ENCODE measurements at regions of chr6 and their contacts with region 1.

Region 1: GRCh38 chr6:102154176-102154575 is 760.7 kb downstream of the GRIK2 start:
- DNase-seq: no peak
- H3K4me3 ChIP-seq: no peak overlapping the region
- H3K27ac ChIP-seq: no peak overlapping the region
- H3K4me1 ChIP-seq: no peaks in the 10 kb centered on the region
- H3K27me3 ChIP-seq: no peaks in the 10 kb centered on the region
- CTCF ChIP-seq: no peak
- POLR2A ChIP-seq: no peak

Region 2: DNA sequence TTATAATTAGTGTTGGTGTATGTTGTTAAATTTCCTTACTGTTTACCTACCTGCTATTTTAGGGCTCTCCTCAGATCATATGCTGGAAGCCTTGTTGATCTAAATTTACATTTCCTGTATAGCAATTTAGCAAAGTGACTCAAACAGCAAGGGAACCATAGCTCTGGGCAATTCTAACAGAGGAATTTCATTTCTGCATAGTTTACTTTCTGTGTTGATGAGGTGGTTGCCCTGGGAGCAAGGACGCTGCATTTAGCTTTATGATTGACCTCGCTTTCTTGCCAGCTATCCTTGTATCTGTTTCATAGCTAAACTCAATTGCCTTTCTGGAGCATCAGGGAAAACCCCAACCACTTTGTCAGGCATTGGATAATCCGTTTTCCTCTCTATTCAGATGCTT is 50.2 kb after region 1 on chr6:
- intact Hi-C with region 1: no loop called
- DNase-seq: no peak
- H3K4me3 ChIP-seq: no peak overlapping the region
- H3K27ac ChIP-seq: no peak overlapping the region
- H3K4me1 ChIP-seq: no peaks in the 10 kb centered on the region
- H3K27me3 ChIP-seq: no peaks in the 10 kb centered on the region
- CTCF ChIP-seq: no peak
- POLR2A ChIP-seq: no peak

Region 3: DNA sequence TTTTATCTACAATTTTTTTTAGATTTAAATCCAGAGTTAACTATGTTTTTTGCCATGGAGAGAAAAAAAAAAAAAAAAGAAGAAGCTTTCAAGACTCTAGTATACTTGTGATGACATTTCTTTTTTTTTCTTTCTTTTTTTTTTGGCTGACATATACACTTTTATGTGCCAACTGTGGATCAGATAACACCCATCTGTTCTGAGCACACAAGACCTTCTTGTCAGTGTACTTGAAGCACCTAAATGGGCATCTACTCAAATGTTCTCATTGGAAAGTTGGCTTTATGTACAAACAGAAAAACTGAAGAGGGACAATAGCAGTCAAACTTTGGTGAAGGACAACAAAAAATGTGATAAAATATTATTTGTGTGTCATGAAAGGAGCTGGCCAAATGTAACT is 143.9 kb after region 1 on chr6:
- intact Hi-C with region 1: no loop called
- DNase-seq: no peak
- H3K4me3 ChIP-seq: no peak overlapping the region
- H3K27ac ChIP-seq: no peak overlapping the region
- H3K4me1 ChIP-seq: no peaks in the 10 kb centered on the region
- H3K27me3 ChIP-seq: no peaks in the 10 kb centered on the region
- CTCF ChIP-seq: no peak
- POLR2A ChIP-seq: no peak

Region 4: DNA sequence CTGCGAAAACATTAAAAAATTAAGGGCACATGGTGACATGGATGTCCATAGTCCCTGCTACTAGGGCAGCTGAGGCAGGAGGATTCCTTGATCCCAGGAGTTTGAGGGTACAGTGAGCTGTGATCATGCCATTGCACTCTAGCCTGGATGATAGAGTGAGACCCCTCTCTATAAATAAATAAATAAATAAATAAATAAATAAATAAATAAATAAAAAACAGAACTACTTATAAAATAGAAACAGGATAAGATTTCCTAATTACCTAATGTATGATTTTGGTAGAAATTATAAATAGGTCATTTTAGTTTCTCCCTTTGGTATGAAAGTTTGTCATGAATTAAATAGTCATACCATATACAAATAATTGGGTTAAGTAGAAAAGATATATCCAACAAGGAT is 155.5 kb after region 1 on chr6:
- intact Hi-C with region 1: loop called (anchors 5 kb)
- DNase-seq: no peak
- H3K4me3 ChIP-seq: no peak overlapping the region
- H3K27ac ChIP-seq: no peak overlapping the region
- H3K4me1 ChIP-seq: no peaks in the 10 kb centered on the region
- H3K27me3 ChIP-seq: no peaks in the 10 kb centered on the region
- CTCF ChIP-seq: no peak
- POLR2A ChIP-seq: no peak

Measured in thyroid gland (tissue), 4 donors.